ENCODE measurements at regions of chr10 and their contacts with region 1.

Region 1: DNA sequence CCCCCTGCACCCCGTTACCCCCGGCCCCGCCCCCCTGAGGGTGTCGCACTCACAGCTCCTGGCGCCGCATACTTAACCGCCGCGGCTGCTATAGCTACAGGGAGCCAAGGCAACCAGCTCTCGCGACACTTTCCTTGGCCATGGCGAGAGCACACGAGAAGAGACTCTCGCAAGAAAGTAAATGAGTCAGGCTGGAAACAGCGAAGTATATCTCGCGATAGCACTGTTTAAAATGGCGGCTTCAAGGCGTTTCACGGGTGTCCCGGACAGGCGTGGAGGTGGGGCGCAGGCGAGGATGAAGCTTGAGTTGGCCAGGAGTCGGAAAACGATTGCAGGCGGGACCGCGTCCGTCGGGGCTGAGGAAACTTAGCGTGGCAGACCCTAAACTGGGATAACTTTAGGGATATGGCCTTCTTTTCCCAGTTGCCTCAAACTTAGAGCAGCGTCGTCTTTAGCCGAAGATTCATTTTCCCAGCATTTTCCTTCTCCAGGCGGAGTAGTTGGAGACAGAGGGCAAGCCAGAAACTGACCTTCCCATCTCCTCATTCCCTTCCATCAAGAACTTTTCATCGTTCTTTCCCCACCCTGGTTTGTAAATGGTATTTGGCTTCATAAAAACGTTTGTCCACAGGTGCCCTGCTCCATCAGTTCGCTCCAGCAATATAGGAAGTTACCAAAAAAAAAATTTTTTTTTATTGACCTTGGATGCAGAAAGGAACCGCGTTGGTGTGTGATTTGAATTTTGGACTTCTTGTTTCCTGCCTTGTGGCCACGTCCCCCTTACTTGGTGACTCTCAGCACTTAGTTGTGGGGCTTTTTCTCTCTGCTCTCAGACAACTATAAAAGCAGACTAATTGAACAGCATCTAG is 15.2 kb downstream of the MYOZ1 start:
- DNase-seq: peak; percentile 97
- H3K4me3 Mint-ChIP-seq: peak overlapping the region; percentile 99
- H3K27ac Mint-ChIP-seq: peak overlapping the region; percentile 95
- H3K4me1 Mint-ChIP-seq: peaks cover 17% of the 10 kb centered on the region
- H3K27me3 Mint-ChIP-seq: no peaks in the 10 kb centered on the region

Region 2: DNA sequence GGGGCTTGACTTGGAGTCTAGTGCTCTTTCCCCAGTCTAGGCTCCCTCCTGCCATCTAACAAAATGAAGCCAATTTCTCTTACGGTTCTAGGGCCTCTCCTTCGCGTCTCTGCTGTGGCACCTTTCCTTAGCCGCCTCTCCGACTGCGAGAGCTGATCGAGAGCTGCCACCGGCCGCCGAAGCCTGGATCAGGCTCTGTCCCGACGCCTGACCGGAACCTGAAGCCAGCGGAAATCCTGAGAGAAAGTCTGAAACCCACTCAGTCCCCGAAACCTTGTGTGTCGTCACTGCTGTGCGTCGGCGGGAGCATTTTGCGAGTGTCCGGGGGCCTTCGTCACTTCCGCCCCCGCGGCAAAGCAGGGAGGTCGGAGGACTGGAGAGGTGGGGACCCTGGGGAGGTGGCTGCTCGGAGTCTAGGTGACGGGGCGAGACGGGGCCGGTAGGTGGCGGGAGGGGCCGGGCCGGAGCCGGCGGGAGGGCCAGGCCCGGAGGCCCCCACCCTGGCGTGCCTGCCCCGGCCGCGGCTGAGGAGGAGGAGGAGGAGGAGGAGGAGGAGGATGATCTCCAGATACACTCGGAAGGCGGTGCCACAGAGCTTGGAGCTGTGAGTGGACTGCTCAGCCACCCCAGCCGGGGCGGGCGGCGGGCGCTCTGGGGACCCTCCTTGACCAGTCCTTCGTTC is 458.2 kb before region 1 on chr10 and contains the starts of genes ECD and FAM149B1:
- CTCF ChIA-PET with region 1: no interaction called
- intact Hi-C with region 1: loop called (anchors 10 kb)
- DNase-seq: peak; percentile 96
- H3K4me3 Mint-ChIP-seq: peak within 1 kb of the TSS; percentile 100
- H3K27ac Mint-ChIP-seq: peak within 1 kb of the TSS; percentile 100
- H3K4me1 Mint-ChIP-seq: peaks cover 37% of the 10 kb centered on the region
- H3K27me3 Mint-ChIP-seq: no peaks in the 10 kb centered on the region
- total RNA-seq, gene ECD: 26.5 to 28.1 TPM
- total RNA-seq, gene FAM149B1: 13.3 to 13.7 TPM

Region 3: GRCh38 chr10:73252445-73253224 is 373.5 kb before region 1 on chr10 and contains the start of gene MRPS16:
- CTCF ChIA-PET with region 1: no interaction called
- intact Hi-C with region 1: loop called (anchors 1 kb)
- DNase-seq: peak; percentile 97
- H3K4me3 Mint-ChIP-seq: peak within 1 kb of the TSS; percentile 98
- H3K27ac Mint-ChIP-seq: peak within 1 kb of the TSS; percentile 94
- H3K4me1 Mint-ChIP-seq: peaks cover 38% of the 10 kb centered on the region
- H3K27me3 Mint-ChIP-seq: no peaks in the 10 kb centered on the region
- total RNA-seq, gene MRPS16: 140 to 145 TPM

Region 4: DNA sequence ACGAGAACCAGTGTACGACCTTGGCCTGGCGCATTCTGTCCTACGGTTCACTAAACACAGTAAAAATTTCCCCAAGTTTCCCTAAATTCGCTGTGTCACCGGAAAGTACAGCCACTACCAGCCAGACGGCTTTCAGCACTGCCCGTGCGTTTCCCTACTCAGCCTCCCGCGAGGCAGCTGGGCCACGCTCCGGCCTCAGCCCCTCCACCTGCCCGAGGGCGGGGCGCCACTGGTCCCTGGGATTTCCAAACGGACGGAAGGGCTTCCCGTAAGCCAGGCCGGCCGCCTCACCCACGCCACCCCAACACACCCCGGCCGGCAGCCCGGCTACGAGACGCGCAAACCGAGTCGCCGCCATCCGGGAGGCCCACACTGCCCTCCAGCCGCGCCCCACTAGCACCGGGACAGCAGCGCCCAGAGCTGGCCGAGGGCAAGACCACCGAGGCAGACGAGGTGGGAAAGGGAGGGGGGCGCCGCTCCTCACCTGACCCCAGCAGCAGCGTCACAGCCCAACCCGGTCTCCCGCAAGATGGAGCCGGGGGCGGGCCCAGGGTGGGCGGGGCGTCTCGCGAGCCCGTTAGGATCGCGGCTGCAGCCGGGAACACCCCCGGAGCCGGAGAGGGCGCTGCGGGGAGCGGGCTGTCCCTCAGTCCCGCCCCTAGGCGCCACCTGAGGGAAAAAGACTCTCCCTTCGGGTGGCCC is 212.4 kb before region 1 on chr10 and contains the start of gene ANXA7:
- CTCF ChIA-PET with region 1: no interaction called
- intact Hi-C with region 1: loop called (anchors 5 kb)
- DNase-seq: peak; percentile 96
- H3K4me3 Mint-ChIP-seq: peak within 1 kb of the TSS; percentile 95
- H3K27ac Mint-ChIP-seq: peak within 1 kb of the TSS; percentile 93
- H3K4me1 Mint-ChIP-seq: peaks cover 56% of the 10 kb centered on the region
- H3K27me3 Mint-ChIP-seq: peaks cover 5% of the 10 kb centered on the region
- total RNA-seq, gene ANXA7: 130 to 134 TPM

Region 5: DNA sequence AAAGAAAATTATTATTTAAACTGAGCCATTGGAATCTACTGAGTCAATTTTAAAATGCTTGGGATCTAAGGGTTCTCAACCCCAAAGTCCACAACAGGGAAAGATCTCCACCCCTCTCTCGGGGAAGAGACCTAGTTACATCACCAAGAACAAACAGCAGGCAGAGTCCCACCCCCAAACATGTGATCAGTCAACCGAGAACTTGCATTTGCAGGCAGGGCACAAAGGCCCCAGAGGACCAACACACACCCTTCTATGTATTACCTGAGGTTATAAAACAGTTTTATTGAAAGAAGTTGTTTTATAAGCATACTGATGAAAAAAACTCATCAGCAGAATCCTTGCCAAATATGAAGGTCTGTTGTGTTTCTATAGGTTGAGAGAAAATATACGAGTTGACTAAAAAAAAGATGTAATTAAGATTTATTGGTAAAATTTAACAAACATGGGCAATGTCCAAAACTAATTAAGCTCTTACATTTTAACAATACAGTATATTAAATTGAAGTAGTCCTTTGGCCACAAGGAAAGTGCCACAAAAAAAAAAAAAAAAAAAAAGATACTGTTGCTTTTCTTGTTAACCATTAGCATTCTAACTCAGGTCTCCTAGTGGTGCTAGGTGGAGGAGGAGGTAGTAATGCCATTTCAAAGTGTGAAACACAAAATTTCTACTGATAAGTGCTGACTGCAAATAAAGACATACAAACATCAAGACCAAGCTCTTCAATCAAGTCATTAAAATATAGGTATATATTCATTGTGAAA is 34.0 kb before region 1 on chr10:
- CTCF ChIA-PET with region 1: no interaction called
- intact Hi-C with region 1: loop called (anchors 1 kb)
- DNase-seq: peak; percentile 59
- H3K4me3 Mint-ChIP-seq: no peak overlapping the region
- H3K27ac Mint-ChIP-seq: peak overlapping the region; percentile 71
- H3K4me1 Mint-ChIP-seq: peaks cover 17% of the 10 kb centered on the region
- H3K27me3 Mint-ChIP-seq: no peaks in the 10 kb centered on the region

Region 6: GRCh38 chr10:73772280-73773151 is 146.4 kb after region 1 on chr10:
- CTCF ChIA-PET with region 1: no interaction called
- intact Hi-C with region 1: loop called (anchors 5 kb)
- DNase-seq: peak; percentile 81
- H3K4me3 Mint-ChIP-seq: peak overlapping the region; percentile 93
- H3K27ac Mint-ChIP-seq: peak overlapping the region; percentile 93
- H3K4me1 Mint-ChIP-seq: peaks cover 44% of the 10 kb centered on the region
- H3K27me3 Mint-ChIP-seq: no peaks in the 10 kb centered on the region

Measured in activated naive CD4-positive, alpha-beta T cell treated with anti-CD3 and anti-CD28 coated beads for 36 hours (primary cell).